Mammary epithelial cell (primary cell): ENCODE measurements at regions of chr11 and their contacts with region 1.

Region 1: DNA sequence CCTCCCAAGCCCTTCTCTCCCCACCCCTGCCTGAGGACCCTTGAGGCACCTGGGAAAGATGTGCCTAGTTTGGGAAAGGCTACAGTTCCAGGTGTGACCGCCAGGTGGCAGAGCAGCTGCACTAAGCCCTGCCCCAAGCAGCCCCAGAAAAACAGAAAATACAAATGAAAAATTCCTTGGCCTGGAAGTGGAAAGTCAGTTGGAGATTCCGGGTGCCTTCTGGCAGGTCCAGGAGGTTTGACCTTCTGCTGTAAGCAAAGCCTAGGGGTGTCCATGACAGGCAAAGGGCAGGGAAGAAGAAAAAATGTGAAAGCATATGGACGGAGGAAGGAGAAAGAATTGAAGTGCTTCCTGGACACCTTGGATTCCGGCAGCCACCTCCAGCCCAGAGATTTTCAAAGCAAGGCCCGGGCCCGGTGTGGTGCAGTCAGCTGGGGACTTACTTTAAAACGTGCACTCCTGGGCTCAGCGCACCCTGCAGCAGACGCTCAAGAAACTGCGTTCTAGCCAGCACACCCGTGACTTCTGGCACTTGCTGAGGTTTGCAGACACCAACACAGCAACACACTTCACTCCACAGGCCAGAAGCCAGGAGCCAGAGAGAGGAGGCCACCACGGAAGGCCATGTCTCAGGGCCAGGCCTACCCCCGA is 37.3 kb upstream of the SLC22A12 start:
- DNase-seq: no peak
- H3K4me3 ChIP-seq: no peak overlapping the region
- H3K27ac ChIP-seq: no peak overlapping the region
- H3K4me1 ChIP-seq: no peaks in the 10 kb centered on the region
- H3K27me3 ChIP-seq: no peaks in the 10 kb centered on the region
- CTCF ChIP-seq: peak; percentile 91 to 97

Region 2: DNA sequence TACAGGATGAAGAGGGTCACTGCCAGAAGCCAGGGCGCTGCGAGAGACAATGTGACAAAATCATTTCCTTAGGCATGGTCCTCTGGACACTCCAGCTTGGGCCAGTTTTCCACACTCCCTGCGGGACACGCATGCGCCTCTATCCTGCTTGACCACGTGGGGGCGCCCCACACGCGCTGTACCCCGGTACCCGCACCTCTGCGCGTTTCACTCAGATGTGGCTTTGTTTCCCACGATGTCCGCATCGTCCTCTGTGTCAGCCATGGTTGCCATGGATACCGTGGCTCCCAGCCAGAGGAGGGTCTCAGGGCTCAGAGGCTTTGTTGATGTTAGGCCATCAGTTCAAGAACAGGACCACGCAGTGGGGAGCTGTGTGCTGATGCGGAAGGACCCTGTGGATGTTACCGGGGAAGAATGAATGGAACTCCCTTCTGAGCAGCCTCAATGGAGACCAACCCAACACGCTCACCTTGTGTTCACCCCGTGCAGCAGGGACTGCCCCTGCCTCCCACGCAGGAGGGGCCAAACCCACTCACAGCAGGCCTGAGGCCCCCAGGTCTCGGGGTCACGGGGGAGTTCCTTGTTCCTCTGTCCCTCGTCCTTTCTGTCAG is 63.7 kb before region 1 on chr11:
- CTCF ChIA-PET with region 1: no interaction called
- dilution Hi-C with region 1: no loop called
- in situ Hi-C with region 1: no loop called
- intact Hi-C with region 1: loop called (anchors 1 kb)
- DNase-seq: peak; percentile 27
- H3K4me3 ChIP-seq: no peak overlapping the region
- H3K27ac ChIP-seq: no peak overlapping the region
- H3K4me1 ChIP-seq: no peaks in the 10 kb centered on the region
- H3K27me3 ChIP-seq: peaks cover 2% of the 10 kb centered on the region
- CTCF ChIP-seq: peak; percentile 69 to 95

Region 3: DNA sequence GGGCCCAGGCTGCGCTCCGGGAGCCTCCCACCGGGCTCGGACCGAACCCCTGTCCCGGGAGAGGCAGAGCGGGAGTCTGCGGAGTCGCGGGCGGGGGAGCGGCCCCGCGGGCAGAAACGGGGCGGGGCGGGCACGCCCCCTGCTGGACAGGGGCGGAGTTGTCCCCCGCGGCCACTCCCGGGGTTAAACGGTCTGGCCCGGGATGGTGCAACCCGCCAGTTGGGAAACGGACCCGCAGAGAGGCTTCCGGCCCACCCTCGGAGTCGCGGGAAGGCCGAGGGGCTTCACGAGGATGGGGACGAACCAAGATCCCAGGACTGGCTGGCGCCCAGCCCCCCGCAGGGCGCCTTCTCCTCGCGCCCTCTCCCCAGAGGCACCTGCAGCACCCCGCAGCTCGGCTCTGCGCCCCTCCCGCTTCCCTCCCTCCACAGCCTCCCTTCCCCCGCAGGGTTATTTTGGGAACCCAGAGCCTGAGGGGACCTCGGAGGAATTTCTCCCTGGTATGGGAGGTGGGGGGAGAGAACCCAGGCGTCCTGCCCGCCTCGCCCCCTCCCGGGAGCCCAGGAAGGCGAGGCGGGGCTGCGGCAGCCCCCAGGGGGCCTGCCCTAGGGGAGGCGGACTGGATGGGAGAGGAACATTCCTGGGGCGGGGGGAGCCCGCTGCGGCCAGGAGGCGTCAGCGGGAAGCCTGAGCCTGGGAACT is 189.4 kb after region 1 on chr11:
- CTCF ChIA-PET with region 1: no interaction called
- dilution Hi-C with region 1: no loop called
- in situ Hi-C with region 1: no loop called
- intact Hi-C with region 1: loop called (anchors 5 kb)
- DNase-seq: peak; percentile 28
- H3K4me3 ChIP-seq: peak overlapping the region; percentile 26 to 47 (median 34)
- H3K27ac ChIP-seq: no peak overlapping the region
- H3K4me1 ChIP-seq: peaks cover 24% of the 10 kb centered on the region
- H3K27me3 ChIP-seq: peaks cover 18% of the 10 kb centered on the region
- CTCF ChIP-seq: peak; percentile 45 to 81